Posterior vena cava (tissue), 2 donors: ENCODE measurements at regions of chr6 and their contacts with region 1.

Region 1: GRCh38 chr6:57177545-57178265 is 5.6 kb downstream of the BAG2 start:
- DNase-seq: peak; percentile 87

Region 2: DNA sequence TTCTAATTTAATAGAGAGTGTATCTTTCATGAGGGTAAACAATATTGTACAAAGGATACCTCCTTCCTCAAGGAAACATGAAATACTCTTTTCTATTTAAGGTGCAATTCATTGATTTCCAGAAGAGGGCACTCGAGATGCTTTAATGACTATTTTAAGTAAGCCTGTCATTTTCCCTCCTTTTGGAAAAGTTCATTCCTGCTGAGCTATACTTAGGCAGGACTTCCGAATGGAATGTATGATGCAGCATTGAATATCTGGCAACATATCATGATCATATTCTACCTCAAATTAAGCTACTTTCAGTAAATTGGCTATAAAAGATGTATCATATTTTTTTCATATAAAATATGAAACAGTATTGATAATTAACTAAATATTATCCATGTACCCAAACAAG is 540.1 kb before region 1 on chr6:
- intact Hi-C with region 1: no loop called
- DNase-seq: no peak

Region 3: GRCh38 chr6:57257911-57258541 is 80.3 kb after region 1 on chr6:
- intact Hi-C with region 1: loop called in 1 of 2 experiments (anchors 2 kb)
- DNase-seq: no peak

Region 4: GRCh38 chr6:57316581-57317059 is 138.9 kb after region 1 on chr6:
- intact Hi-C with region 1: loop called (anchors 10 kb)
- DNase-seq: peak; percentile 93